Dendritic cell treated with granulocyte-macrophage colony-stimulating factor and Interleukin-4, amounts not matched to agents 40 ng/mL and 50 ng/mL, for 4 days (primary cell): ENCODE measurements at regions of chr19 and their contacts with region 1.

Region 1: DNA sequence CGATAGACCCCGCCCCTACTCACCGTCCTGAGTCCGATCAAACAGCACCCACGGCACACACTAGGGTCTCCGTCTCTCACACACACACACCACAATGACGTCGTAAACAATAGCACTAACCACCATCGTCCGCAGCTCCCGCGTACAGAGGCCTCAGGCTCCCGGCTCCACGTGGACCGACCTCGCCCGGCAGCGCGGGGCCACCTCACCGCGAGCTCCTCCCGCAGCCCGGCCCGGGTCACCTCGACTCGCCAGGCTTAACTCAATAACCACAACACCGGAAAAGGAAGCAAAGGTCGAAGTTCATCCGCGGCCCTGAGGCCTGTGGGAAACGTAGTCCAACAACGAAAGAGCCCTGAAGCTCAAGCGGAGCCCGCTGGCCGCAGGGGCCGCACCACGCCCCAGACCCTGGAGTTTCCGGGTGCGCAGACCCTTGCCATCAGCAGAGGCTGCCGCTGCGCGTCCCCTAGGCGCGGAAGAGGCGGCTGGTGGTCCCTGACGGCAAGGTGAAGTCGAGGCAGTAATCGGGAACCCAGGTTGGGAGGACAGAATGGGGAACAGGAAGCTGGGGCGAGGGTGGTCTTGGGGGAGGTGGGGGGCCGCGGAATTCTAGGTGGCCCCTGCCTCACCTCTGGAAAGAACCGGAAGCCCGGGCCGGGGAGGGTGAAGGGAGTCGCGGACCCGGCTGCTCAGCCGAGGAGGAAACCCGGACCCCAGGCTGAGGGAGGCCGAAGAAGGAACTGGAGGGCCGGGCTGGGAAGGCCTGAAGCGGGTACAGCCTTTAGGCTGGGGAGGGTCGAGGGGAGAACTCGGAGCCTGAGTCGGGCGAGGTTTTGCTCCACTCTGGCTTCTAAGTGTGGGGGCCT is at the start of gene ZNF529:
- H3K4me3 Mint-ChIP-seq: peak within 1 kb of the TSS; percentile 96
- H3K27ac Mint-ChIP-seq: peak within 1 kb of the TSS; percentile 96
- H3K4me1 Mint-ChIP-seq: peaks cover 31% of the 10 kb centered on the region
- H3K27me3 Mint-ChIP-seq: no peaks in the 10 kb centered on the region

Region 2: GRCh38 chr19:36214386-36215275 is 358.6 kb before region 1 on chr19 and contains the starts of genes ZNF146 and ZNF565:
- intact Hi-C with region 1: loop called (anchors 10 kb)
- H3K4me3 Mint-ChIP-seq: no peak within 1 kb of the TSS
- H3K27ac Mint-ChIP-seq: no peak within 1 kb of the TSS
- H3K4me1 Mint-ChIP-seq: peaks cover 7% of the 10 kb centered on the region
- H3K27me3 Mint-ChIP-seq: no peaks in the 10 kb centered on the region

Region 3: GRCh38 chr19:36378625-36379509 is 194.4 kb before region 1 on chr19 and contains the start of gene ZFP14:
- intact Hi-C with region 1: no loop called
- H3K4me3 Mint-ChIP-seq: peak within 1 kb of the TSS; percentile 92
- H3K27ac Mint-ChIP-seq: peak within 1 kb of the TSS; percentile 94
- H3K4me1 Mint-ChIP-seq: peaks cover 17% of the 10 kb centered on the region
- H3K27me3 Mint-ChIP-seq: no peaks in the 10 kb centered on the region

Region 4: GRCh38 chr19:36514012-36514612 is 59.1 kb before region 1 on chr19:
- intact Hi-C with region 1: no loop called
- H3K4me3 Mint-ChIP-seq: no peak overlapping the region
- H3K27ac Mint-ChIP-seq: no peak overlapping the region
- H3K4me1 Mint-ChIP-seq: no peaks in the 10 kb centered on the region
- H3K27me3 Mint-ChIP-seq: no peaks in the 10 kb centered on the region

Region 5: GRCh38 chr19:36528194-36528920 is 44.9 kb before region 1 on chr19 and contains the start of gene ZNF260:
- intact Hi-C with region 1: loop called (anchors 2 kb)
- H3K4me3 Mint-ChIP-seq: peak within 1 kb of the TSS; percentile 97
- H3K27ac Mint-ChIP-seq: peak within 1 kb of the TSS; percentile 97
- H3K4me1 Mint-ChIP-seq: peaks cover 9% of the 10 kb centered on the region
- H3K27me3 Mint-ChIP-seq: no peaks in the 10 kb centered on the region

Region 6: DNA sequence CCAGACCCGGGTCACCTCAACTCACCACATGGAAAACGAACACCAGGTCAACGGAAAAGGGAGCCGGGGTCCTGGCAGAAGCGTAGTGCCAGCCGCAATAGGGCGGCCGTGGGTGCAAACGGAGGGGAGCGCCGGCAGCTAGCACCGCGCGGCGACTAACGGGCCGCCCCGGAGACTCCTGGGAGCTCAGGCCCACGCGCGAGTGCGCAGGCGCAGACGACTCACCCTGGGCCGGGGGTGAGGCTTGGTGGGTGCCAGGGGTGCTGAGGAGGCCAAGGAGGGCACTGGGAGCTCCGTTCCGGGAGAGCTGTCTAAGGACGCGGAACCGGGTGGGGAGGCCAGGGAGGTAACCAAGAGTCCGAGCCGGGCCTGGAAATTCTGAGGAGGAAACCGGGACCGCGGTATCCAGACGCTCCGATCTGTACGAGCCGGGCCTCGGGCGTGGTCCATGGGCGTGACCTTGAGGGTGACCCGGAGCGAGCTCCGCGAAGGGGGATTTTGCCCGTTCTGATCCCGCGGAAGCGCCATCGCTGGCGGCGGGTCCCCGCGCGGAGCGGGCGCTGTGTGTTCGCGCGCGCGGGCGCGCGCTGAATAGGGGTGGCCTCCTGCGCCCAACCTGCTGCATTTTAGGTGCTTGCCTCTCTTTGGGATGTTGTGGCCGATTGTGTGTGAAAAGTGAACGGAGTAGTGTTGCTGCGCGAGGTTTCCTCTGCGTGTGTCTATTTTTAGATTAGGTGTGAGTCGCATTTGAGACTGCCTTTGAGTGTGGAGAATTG is 32.0 kb after region 1 on chr19 and contains the start of gene ZNF382:
- intact Hi-C with region 1: loop called (anchors 2 kb)
- H3K4me3 Mint-ChIP-seq: peak within 1 kb of the TSS; percentile 92
- H3K27ac Mint-ChIP-seq: peak within 1 kb of the TSS; percentile 93
- H3K4me1 Mint-ChIP-seq: peaks cover 21% of the 10 kb centered on the region
- H3K27me3 Mint-ChIP-seq: no peaks in the 10 kb centered on the region

Region 7: DNA sequence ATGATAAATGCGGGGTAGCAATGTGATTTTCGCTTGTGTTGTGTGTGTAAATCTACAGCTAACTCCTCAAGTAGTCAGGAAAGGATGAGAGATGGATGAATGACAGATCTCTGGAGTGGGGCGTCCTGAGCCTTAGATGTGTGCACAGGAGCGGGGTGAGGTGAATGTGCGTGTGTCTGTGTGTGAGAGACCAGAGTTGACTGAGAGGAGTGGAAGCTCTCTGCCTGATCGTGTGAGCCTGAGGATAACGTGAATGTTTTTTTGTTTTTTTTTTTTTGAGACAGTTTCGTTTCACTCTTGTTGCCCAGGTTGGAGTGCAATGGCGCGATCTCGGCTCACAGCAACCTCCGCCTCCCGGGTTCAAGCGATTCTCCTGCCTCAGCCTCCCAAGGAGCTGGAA is 92.6 kb after region 1 on chr19:
- intact Hi-C with region 1: loop called (anchors 5 kb)
- H3K4me3 Mint-ChIP-seq: peak overlapping the region; percentile 98
- H3K27ac Mint-ChIP-seq: peak overlapping the region; percentile 97
- H3K4me1 Mint-ChIP-seq: peaks cover 22% of the 10 kb centered on the region
- H3K27me3 Mint-ChIP-seq: no peaks in the 10 kb centered on the region

Region 8: DNA sequence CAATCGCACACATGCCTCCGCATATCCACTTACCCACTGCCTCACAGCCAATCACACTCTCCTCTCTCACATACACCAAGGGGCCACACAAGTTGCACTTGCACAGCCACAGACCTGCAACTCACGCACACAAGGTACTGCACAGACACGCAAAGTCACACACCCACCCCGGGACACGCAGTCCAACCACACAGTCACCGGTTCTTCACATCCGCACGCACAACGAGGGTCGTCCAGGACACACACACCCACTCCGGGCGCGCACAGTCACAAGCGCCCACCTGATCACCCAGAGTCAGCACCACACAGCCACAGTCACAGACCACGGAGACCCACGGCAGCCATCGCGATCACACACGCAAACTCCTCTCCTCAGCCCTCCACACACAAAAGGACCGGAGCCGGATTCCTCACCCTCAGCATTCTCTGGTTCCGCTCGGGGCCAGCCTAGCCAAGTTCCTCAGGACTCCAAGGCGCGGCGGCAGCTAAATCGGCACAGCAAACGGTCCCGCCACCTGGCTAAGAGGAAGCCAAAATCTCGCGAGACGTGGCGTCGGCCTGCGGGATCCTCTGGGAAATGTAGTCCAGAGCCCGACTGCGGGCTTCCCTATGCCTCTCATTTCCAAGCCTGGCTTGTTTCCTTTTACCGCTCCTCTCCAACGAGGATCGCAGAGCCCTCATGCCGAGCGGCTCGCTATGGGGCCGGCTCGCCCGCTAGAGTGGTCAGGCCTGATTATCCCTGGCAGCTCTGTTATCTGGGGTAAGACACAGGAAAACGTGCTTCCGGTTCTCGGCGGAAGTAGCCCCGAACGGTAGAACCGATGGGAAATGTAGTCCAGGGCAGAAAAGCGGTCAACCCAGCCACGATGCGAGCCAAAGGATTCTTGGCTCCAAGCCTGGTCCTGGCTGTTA is 199.3 kb after region 1 on chr19 and contains the start of gene ZNF850:
- intact Hi-C with region 1: loop called (anchors 1 kb)
- H3K4me3 Mint-ChIP-seq: peak within 1 kb of the TSS; percentile 86
- H3K27ac Mint-ChIP-seq: peak within 1 kb of the TSS; percentile 89
- H3K4me1 Mint-ChIP-seq: peaks cover 26% of the 10 kb centered on the region
- H3K27me3 Mint-ChIP-seq: no peaks in the 10 kb centered on the region